AG04450 (cell line): ENCODE measurements at regions of chr15 and their contacts with region 1.

Region 1: DNA sequence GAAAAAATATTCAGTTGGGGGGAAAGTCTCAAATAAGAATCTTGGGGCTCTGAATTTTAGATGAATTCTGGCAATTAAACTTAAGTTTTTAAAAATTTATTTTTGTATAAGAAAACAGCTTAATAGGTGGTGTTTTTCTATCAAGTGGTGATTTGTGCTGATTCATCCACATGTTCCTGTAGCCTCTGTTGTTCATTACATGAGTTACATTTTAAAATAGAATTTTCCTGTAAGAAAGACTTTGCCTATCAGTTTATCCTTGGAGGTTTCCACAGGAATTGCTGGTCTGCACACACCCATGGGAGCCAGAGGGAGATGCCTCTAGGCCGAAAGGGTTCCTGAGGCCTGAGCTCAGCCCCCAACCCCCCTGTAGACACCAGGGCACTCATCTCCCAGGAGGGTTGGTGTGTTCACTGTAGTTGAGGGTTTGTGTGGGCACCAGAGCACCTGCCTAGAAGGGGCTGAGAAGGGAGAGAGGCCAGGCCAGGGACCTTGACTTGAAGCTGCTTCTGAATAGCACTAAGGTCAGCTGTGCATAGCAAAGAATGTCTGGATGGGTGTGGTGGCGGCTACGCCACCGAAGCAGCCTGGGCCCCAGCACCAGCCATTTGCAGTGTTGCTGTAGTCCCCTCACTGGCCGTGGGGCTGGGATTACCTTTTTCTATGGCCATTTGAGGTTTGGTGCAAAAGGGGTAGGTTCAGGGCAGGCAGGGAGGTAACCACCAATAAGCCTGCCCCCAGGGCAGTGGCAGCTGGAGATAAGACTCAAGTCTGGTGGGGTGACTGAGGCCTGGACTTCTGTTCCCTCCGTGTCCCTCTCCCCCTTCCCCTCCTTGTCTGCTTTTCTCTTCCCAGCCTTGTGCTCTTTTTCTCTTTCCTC is 11.9 kb downstream of the DNAJA4 start:
- DNase-seq: no peak
- H3K4me3 ChIP-seq: no peak overlapping the region
- H3K27ac ChIP-seq: no peak overlapping the region
- H3K27me3 ChIP-seq: no peaks in the 10 kb centered on the region
- CTCF ChIP-seq: no peak

Region 2: GRCh38 chr15:78291716-78292115 is 15.4 kb after region 1 on chr15:
- CTCF ChIA-PET with region 1: no interaction called
- POLR2A ChIA-PET with region 1: no interaction called
- DNase-seq: no peak
- H3K4me3 ChIP-seq: no peak overlapping the region
- H3K27ac ChIP-seq: no peak overlapping the region
- H3K27me3 ChIP-seq: no peaks in the 10 kb centered on the region
- CTCF ChIP-seq: no peak

Region 3: DNA sequence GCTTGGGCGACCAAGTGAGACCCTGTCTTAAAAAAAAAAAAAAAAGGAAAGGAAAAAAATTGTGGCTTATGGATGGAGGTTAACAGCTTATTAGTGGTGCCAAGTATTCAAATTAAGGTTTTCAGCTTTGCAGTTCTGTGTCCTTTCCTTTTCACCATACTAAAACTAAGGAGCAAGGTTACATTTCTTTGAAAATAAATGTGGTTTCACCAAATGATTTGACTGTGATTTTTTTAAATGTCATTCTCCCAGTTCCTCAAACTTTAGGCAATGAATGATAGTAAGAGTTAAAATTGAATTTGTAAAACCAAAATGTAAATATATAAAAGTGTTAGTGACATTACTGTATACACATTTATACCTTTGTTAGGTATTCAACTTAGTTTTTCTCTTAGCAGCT is 298.6 kb after region 1 on chr15:
- CTCF ChIA-PET with region 1: interaction called, 12 read pairs
- POLR2A ChIA-PET with region 1: no interaction called
- DNase-seq: no peak
- H3K4me3 ChIP-seq: no peak overlapping the region
- H3K27ac ChIP-seq: no peak overlapping the region
- H3K27me3 ChIP-seq: no peaks in the 10 kb centered on the region
- CTCF ChIP-seq: no peak